ENCODE measurements at regions of chr3 and their contacts with region 1.

Region 1: DNA sequence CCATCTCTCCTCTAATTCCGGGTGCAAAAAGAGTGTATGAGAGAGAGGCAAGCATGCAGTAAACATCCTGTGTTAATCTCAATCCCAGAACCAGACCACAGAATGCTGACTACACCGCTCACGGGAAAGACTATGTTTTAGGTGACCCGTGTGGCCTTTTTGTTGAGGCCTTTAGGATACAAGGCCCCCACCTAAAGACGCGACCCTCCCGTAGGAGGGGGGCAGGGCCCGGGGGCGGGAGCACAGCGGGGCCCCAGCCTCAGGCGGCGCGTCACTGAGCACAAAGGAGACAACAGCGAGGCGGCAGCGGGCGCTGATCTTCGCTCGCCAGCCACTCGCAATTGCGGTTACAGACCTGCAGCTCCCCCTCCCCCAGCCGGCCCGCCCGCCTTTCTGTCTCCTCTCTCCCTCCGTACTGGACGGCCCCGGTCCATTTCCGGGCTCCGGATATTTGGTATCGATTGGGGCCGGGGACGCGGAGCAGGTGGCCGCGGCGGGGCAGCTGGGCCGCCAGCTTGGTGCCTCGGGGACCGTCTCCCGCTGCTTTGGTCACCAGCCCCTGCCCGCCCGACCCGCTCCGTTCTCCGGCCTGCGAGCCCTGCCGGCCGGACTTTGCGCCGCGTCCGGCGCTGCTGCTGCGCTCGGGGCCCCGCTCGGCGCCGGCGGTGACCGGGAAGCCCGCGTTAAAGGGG is at the start of gene CCDC50:
- DNase-seq: peak; percentile 89 to 90
- ATAC-seq: peak; percentile 86 to 94 (median 92)
- H3K4me3 ChIP-seq: peak within 1 kb of the TSS; percentile 77 to 97 (median 92)
- H3K27ac ChIP-seq: peak within 1 kb of the TSS; percentile 90 to 99 (median 97)
- H3K4me1 ChIP-seq: peaks cover 9 to 48% (median 43%) of the 10 kb centered on the region in 9 donors
- H3K27me3 ChIP-seq: no peaks in the 10 kb centered on the region
- CTCF ChIP-seq: no peak
- total RNA-seq, gene CCDC50: 39.5 to 58.8 (median 51.2) TPM

Region 2: GRCh38 chr3:191070201-191070600 is 258.9 kb before region 1 on chr3:
- intact Hi-C with region 1: no loop called
- DNase-seq: no peak
- ATAC-seq: no peak
- H3K4me3 ChIP-seq: no peak overlapping the region
- H3K27ac ChIP-seq: no peak overlapping the region
- H3K4me1 ChIP-seq: no peaks in the 10 kb centered on the region
- H3K27me3 ChIP-seq: no peaks in the 10 kb centered on the region
- CTCF ChIP-seq: no peak

Region 3: DNA sequence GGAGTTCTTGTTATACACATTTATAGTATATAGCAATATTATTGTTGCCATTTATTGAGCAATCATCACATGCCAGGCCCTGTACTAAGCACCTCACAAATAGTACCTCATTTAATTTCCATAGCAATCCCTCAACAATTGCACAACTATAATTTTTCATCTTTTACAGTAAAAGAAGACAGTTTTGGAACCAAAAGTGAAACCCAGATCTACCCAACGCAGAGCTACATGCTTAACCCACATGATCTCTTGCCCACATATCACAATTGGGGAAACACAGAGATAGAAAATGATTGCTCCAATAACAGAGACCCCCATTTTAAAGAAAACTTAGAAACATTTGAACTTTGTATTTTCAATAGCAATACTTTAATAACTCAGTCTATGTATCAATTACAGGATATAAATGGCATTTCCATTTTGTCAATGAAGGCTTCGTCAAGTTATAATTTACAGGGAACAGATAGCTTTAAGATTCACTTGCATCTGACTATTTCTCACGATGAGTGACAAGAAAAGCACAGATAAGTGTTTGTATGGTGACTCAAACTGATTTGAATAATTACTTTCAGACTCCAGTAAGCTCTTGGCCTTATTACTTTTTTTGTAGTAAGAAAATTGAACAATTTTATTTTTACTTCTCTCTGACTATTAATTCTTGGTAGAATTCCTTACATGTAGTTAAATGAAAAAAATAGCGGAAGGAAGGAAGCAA is 38.6 kb before region 1 on chr3:
- intact Hi-C with region 1: loop called in 1 of 10 experiments (anchors 1 kb)
- DNase-seq: no peak
- ATAC-seq: peak in 1 of 8 donors; percentile 39
- H3K4me3 ChIP-seq: peak overlapping the region in 6 of 10 donors; percentile 1 to 28 (median 19)
- H3K27ac ChIP-seq: peak overlapping the region in 6 of 10 donors; percentile 1 to 57 (median 50)
- H3K4me1 ChIP-seq: peaks cover 0 to 10% (median 0%) of the 10 kb centered on the region in 9 donors
- H3K27me3 ChIP-seq: no peaks in the 10 kb centered on the region
- CTCF ChIP-seq: no peak

Region 4: DNA sequence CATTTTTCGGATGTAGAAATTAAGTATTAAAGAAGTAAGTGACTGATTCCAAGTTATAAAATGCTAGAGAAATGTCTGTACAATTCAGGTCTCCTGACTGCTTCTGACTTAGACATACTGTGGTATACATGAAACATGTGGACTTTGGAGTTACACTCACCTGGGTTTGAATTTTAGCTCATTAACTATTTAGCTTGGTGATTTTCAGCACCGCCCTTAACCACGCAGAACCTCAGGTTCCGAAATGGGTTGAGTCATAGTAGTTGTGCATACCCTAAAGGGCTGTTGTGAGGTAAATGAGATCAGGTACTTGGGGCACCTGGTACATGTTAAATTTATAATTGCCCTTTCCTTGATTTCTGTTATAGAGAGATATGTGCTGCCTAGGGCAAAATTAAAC is 34.1 kb after region 1 on chr3:
- intact Hi-C with region 1: loop called in 2 of 10 experiments (anchors 5 kb)
- DNase-seq: no peak
- ATAC-seq: no peak
- H3K4me3 ChIP-seq: no peak overlapping the region
- H3K27ac ChIP-seq: no peak overlapping the region
- H3K4me1 ChIP-seq: peaks cover 0 to 20% (median 14%) of the 10 kb centered on the region in 9 donors
- H3K27me3 ChIP-seq: no peaks in the 10 kb centered on the region
- CTCF ChIP-seq: no peak

Region 5: GRCh38 chr3:191369616-191370010 is 40.5 kb after region 1 on chr3:
- intact Hi-C with region 1: loop called in 2 of 10 experiments (anchors 5 kb)
- DNase-seq: no peak
- ATAC-seq: peak in 2 of 8 donors; percentile 14 to 47
- H3K4me3 ChIP-seq: no peak overlapping the region
- H3K27ac ChIP-seq: no peak overlapping the region
- H3K4me1 ChIP-seq: peaks cover 0 to 31% (median 19%) of the 10 kb centered on the region in 9 donors
- H3K27me3 ChIP-seq: no peaks in the 10 kb centered on the region
- CTCF ChIP-seq: no peak

Region 6: GRCh38 chr3:191376516-191377141 is 47.5 kb after region 1 on chr3:
- intact Hi-C with region 1: loop called in 3 of 10 experiments (anchors 5 to 10 kb)
- DNase-seq: no peak
- ATAC-seq: peak in 7 of 8 donors; percentile 56 to 78 (median 65)
- H3K4me3 ChIP-seq: no peak overlapping the region
- H3K27ac ChIP-seq: peak overlapping the region in 8 of 10 donors; percentile 11 to 65 (median 36)
- H3K4me1 ChIP-seq: peaks cover 3 to 55% (median 43%) of the 10 kb centered on the region in 9 donors
- H3K27me3 ChIP-seq: no peaks in the 10 kb centered on the region
- CTCF ChIP-seq: no peak

Region 7: DNA sequence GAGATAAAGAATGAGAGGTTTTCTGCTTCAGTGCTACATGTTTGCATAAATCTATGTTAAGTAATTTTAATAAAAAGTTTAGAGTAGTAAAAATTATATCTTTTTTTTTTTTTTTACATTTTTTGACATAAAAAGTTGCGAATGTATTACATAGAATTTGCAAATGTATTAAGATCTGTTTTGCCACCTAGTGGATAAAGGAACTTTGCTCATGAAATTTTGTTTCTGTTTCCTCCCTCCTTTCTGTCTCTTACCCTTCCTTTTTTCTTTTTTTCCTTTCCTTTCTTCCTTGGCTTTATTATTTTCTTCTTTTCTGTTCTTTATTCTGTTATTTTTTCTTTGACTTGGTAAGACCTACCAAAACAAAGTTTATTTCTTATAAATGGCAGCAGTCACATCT is 59.7 kb after region 1 on chr3:
- intact Hi-C with region 1: loop called in 1 of 10 experiments (anchors 10 kb)
- DNase-seq: no peak
- ATAC-seq: no peak
- H3K4me3 ChIP-seq: no peak overlapping the region
- H3K27ac ChIP-seq: no peak overlapping the region
- H3K4me1 ChIP-seq: peaks cover 0 to 9% (median 0%) of the 10 kb centered on the region in 9 donors
- H3K27me3 ChIP-seq: no peaks in the 10 kb centered on the region
- CTCF ChIP-seq: peak in 7 of 9 donors; percentile 21 to 53 (median 41)

Region 8: GRCh38 chr3:191470080-191470479 is 141.0 kb after region 1 on chr3:
- intact Hi-C with region 1: no loop called
- DNase-seq: no peak
- ATAC-seq: no peak
- H3K4me3 ChIP-seq: no peak overlapping the region
- H3K27ac ChIP-seq: peak overlapping the region in 1 of 10 donors; percentile 16
- H3K4me1 ChIP-seq: peaks cover 0 to 8% (median 0%) of the 10 kb centered on the region in 9 donors
- H3K27me3 ChIP-seq: no peaks in the 10 kb centered on the region
- CTCF ChIP-seq: no peak

Measured in heart right ventricle (tissue), 16 donors.